ENCODE measurements at regions of chr2 and their contacts with region 1.

Region 1: DNA sequence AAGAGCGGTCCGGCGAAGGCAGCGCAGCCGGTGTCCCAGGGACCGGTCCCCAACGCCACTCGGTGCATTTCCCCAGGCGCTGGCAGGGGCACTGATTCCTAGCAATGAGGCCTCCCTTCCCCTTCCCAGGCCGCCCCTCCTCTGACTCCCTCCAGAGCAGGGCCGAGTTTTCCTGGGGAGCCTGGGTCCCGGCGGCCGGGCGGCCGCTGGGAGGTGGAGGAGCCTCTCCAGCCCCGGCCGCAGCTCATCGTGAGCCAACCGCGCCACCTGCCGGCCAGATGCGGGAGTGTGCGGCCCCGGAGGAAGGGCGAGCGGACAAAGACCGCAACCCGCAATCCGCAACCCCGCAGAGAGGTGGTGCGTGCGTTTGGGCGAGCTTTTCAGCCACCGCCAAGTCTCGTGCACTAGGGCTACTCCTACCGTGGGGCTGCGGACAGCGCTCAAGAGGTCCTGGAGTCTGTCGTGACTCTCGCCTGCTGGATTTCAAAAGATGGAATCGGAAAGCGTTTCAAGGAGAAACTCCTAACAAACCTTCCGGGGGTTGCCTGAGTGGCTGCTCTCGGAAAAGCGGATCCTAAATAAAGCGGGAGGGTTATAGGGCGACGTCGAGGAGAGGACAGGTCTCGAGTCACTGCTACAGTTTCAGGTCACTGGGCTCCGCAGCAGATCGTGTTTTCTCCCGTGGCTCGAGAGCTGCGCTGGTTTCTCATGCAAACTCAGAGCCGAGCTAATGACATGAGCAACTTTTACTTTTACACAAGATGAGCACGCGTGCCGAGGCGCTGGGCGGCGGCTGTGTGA is 1.5 kb upstream of the EPHA4 start:
- DNase-seq: peak; percentile 27 to 86 (median 66)
- ATAC-seq: peak; percentile 47 to 59 (median 54)
- H3K4me3 ChIP-seq: peak overlapping the region; percentile 88 to 97
- H3K4me3 Mint-ChIP-seq: peak overlapping the region; percentile 79 to 96 (median 88)
- H3K27ac ChIP-seq: no peak overlapping the region
- H3K27ac Mint-ChIP-seq: peak overlapping the region; percentile 12 to 34
- H3K4me1 ChIP-seq: peaks cover 4 to 43% of the 10 kb centered on the region in 2 experiments
- H3K4me1 Mint-ChIP-seq: peaks cover 28 to 36% (median 31%) of the 10 kb centered on the region in 3 donors
- H3K27me3 ChIP-seq: peaks cover 2 to 48% of the 10 kb centered on the region in 2 experiments
- H3K27me3 Mint-ChIP-seq: peaks cover 41 to 57% of the 10 kb centered on the region in 2 donors

Region 2: DNA sequence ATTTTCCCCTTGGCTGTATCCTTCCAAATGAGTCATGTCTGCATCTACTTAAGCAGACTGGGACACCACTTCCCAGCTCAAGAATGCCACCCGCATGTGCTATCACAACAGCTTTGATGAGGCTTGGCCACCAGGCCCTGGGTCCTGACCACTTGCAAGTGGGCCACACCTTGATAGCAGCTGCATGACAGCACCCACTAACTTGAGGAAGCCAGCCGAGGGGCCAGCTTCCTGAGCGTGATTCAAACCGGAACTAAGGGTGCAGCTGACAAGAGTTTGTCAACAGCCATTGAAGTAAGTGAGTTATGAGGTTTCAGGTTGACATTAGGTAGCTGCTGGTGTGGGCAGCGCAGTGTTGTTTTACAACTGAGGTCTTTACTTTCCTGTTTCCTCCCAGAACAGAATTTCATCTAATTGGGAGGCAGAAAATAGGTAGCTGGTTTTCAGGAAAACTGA is 55.9 kb before region 1 on chr2:
- CTCF ChIA-PET with region 1: interaction called in 1 of 2 experiments, 19 read pairs
- POLR2A ChIA-PET with region 1: interaction called, 5 to 34 read pairs
- DNase-seq: peak; percentile 53 to 87 (median 75)
- ATAC-seq: peak; percentile 72 to 85 (median 83)
- H3K4me3 ChIP-seq: peak overlapping the region; percentile 25
- H3K4me3 Mint-ChIP-seq: no peak overlapping the region
- H3K27ac ChIP-seq: peak overlapping the region; percentile 96
- H3K27ac Mint-ChIP-seq: no peak overlapping the region
- H3K4me1 ChIP-seq: peaks cover 42 to 44% of the 10 kb centered on the region in 2 experiments
- H3K4me1 Mint-ChIP-seq: peaks cover 4 to 24% (median 22%) of the 10 kb centered on the region in 3 donors
- H3K27me3 ChIP-seq: no peaks in the 10 kb centered on the region
- H3K27me3 Mint-ChIP-seq: no peaks in the 10 kb centered on the region